PC-9 (cell line): ENCODE measurements at regions of chr7 and their contacts with region 1.

Region 1: GRCh38 chr7:104217620-104218019 is 9.8 kb upstream of the ORC5 start:
- DNase-seq: no peak
- H3K4me3 ChIP-seq: no peak overlapping the region
- H3K27ac ChIP-seq: no peak overlapping the region
- H3K4me1 ChIP-seq: no peaks in the 10 kb centered on the region
- H3K27me3 ChIP-seq: no peaks in the 10 kb centered on the region
- CTCF ChIP-seq: no peak

Region 2: GRCh38 chr7:103915680-103916357 is 301.8 kb before region 1 on chr7:
- CTCF ChIA-PET with region 1: no interaction called
- POLR2A ChIA-PET with region 1: no interaction called
- intact Hi-C with region 1: no loop called
- DNase-seq: no peak
- H3K4me3 ChIP-seq: no peak overlapping the region
- H3K27ac ChIP-seq: no peak overlapping the region
- H3K4me1 ChIP-seq: no peaks in the 10 kb centered on the region
- H3K27me3 ChIP-seq: no peaks in the 10 kb centered on the region
- CTCF ChIP-seq: no peak

Region 3: GRCh38 chr7:104838537-104839299 is 621.1 kb after region 1 on chr7:
- CTCF ChIA-PET with region 1: interaction called, 10 read pairs
- POLR2A ChIA-PET with region 1: no interaction called
- intact Hi-C with region 1: no loop called
- DNase-seq: no peak
- H3K4me3 ChIP-seq: no peak overlapping the region
- H3K27ac ChIP-seq: no peak overlapping the region
- H3K4me1 ChIP-seq: no peaks in the 10 kb centered on the region
- H3K27me3 ChIP-seq: peaks cover 45% of the 10 kb centered on the region
- CTCF ChIP-seq: no peak